ENCODE measurements at regions of chr1 and their contacts with region 1.

Region 1: GRCh38 chr1:87402241-87403002 is 73.7 kb downstream of the LMO4 start:
- DNase-seq: no peak
- ATAC-seq: peak in 2 of 4 donors; percentile 61 to 75
- H3K4me3 ChIP-seq: no peak overlapping the region
- H3K27ac ChIP-seq: peak overlapping the region in 5 of 12 donors; percentile 12 to 52 (median 18)
- H3K4me1 ChIP-seq: peaks cover 0 to 20% (median 0%) of the 10 kb centered on the region in 12 donors
- H3K27me3 ChIP-seq: no peaks in the 10 kb centered on the region
- CTCF ChIP-seq: no peak
- POLR2A ChIP-seq: no peak

Region 2: DNA sequence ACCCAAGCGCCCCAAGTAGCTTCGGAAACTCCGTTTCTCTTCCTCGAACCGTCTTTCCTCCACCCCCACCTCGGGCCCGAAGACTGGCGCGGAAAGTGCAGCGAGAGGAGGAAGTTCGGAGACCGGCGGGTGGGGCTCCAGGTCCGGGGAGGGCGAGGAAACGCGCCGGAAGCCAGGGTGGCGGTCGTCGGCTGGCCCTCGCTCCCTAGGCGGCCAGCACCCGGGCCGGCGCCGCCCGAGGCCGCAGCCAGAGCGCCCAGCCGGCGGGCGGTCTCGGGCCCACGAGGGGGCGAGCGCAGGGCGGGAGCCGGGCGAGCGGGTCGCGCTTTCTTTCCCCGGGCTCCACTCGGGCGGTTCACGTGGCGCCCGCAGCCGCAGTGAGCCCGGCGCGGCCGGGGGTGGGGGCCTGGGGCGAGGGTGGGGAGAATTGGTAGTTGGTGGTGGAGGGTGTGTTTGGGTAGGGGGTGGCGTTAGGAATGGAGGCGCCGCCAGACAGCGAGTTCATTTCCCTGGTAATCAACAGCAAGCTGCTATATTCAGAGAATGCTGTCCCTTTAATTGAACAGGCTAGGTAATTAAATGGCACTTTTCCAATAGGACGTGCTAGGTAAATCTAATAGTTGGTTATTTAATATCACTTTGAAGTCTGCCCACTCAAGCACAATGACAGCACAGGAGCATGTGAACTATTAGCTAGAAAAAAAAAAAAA is 67.1 kb before region 1 on chr1:
- intact Hi-C with region 1: loop called in 2 of 10 experiments (anchors 10 kb)
- DNase-seq: peak; percentile 75 to 90 (median 83)
- ATAC-seq: peak; percentile 17 to 80 (median 76)
- H3K4me3 ChIP-seq: peak overlapping the region; percentile 40 to 88 (median 74)
- H3K27ac ChIP-seq: peak overlapping the region; percentile 20 to 88 (median 80)
- H3K4me1 ChIP-seq: peaks cover 3 to 65% (median 37%) of the 10 kb centered on the region in 12 donors
- H3K27me3 ChIP-seq: no peaks in the 10 kb centered on the region
- CTCF ChIP-seq: peak in 10 of 12 donors; percentile 13 to 65 (median 46)
- POLR2A ChIP-seq: no peak

Region 3: DNA sequence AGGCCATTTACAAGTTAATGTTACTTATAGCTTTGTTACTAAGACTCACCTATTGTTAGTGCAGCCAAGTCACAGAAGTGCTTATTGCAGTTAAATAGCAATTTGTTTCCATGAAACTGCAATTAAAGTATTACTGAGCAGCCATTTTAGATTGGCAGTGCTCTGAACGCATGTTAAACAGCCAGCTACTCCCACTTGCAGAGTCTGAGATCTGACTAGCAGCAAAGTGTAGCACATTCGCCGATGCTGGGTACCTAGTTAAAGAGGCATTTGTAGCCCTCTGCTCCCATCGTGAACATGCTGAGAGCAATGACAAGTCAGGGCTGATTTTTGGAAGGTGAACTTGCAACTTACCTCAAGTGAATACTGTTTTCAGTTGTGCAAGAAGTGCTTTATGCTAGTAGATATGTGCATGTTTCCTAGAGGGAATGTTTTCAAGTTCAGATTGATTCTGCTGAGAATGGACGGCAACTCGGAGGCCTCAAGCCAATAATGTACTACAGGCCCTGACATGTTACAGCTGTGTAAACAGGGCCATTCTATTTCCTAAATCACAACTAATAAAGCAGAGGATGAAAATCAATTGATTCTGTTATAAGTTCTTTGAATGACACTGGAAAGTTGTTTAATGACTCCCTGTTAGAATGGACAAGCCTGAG is 54.0 kb before region 1 on chr1:
- intact Hi-C with region 1: loop called in 1 of 10 experiments (anchors 10 kb)
- DNase-seq: no peak
- ATAC-seq: no peak
- H3K4me3 ChIP-seq: no peak overlapping the region
- H3K27ac ChIP-seq: no peak overlapping the region
- H3K4me1 ChIP-seq: peaks cover 0 to 14% (median 0%) of the 10 kb centered on the region in 12 donors
- H3K27me3 ChIP-seq: no peaks in the 10 kb centered on the region
- CTCF ChIP-seq: no peak
- POLR2A ChIP-seq: no peak

Measured in heart left ventricle (tissue), 16 donors.